Activated CD4-positive, alpha-beta T cell treated with anti-CD3 and anti-CD28 coated beads for 36 hours (primary cell): ENCODE measurements at regions of chr1 and their contacts with region 1.

Region 1: GRCh38 chr1:152047730-152048402 is 11.1 kb upstream of the S100A11 start:
- DNase-seq: peak; percentile 94
- ATAC-seq: peak; percentile 90
- H3K4me3 Mint-ChIP-seq: peak overlapping the region; percentile 72
- H3K27ac Mint-ChIP-seq: peak overlapping the region; percentile 99
- H3K4me1 Mint-ChIP-seq: peaks cover 25% of the 10 kb centered on the region
- H3K27me3 Mint-ChIP-seq: peaks cover 2% of the 10 kb centered on the region

Region 2: GRCh38 chr1:151819976-151820623 is 227.8 kb before region 1 on chr1:
- CTCF ChIA-PET with region 1: no interaction called
- POLR2A ChIA-PET with region 1: no interaction called
- intact Hi-C with region 1: no loop called
- DNase-seq: peak; percentile 75
- ATAC-seq: peak; percentile 71
- H3K4me3 Mint-ChIP-seq: peak overlapping the region; percentile 30
- H3K27ac Mint-ChIP-seq: peak overlapping the region; percentile 83
- H3K4me1 Mint-ChIP-seq: peaks cover 75% of the 10 kb centered on the region
- H3K27me3 Mint-ChIP-seq: no peaks in the 10 kb centered on the region

Region 3: GRCh38 chr1:151993654-151994496 is 54.0 kb before region 1 on chr1 and contains the start of gene S100A10:
- CTCF ChIA-PET with region 1: interaction called, 4 read pairs
- POLR2A ChIA-PET with region 1: no interaction called
- intact Hi-C with region 1: loop called in 1 of 2 experiments (anchors 1 kb)
- DNase-seq: peak; percentile 85
- ATAC-seq: peak; percentile 79
- H3K4me3 Mint-ChIP-seq: peak within 1 kb of the TSS; percentile 90
- H3K27ac Mint-ChIP-seq: peak within 1 kb of the TSS; percentile 94
- H3K4me1 Mint-ChIP-seq: peaks cover 48% of the 10 kb centered on the region
- H3K27me3 Mint-ChIP-seq: no peaks in the 10 kb centered on the region
- total RNA-seq, gene S100A10: 230 to 246 TPM

Region 4: DNA sequence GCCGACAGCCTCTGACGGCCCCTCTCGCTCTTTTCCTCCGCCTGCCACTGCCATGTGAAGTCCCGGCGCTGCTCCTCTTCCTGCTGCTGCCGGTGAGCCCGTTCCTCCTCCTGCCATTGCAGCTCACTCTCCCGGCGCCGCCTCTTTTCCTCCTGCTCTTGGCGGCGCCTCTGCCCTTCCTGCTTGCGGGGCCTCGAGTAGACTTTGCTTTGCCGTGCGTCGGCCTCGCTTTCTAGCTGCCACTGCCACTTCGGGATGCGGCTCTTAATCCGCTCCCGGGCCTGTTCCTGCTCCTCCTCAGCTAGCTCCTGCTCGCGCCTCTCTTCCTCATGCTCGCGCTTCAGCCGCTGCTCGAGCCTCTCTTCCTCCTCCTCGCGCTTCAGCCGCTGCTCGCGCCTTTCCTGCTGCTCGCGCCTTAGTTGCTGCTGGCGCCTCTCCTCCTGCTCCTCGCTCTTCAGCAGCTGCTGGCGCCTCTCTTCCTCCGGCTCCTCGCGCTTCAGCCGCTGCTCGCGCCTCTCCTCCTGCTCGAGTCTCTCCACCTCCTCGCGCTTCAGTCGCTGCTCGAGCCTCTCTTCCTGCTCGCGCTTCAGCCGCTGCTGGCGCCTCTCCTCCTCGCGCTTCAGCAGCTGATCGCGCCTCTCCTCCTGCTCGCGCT is 63.1 kb after region 1 on chr1:
- CTCF ChIA-PET with region 1: interaction called, 33 read pairs
- POLR2A ChIA-PET with region 1: no interaction called
- intact Hi-C with region 1: loop called (anchors 1 to 5 kb)
- DNase-seq: peak; percentile 65
- ATAC-seq: peak; percentile 63
- H3K4me3 Mint-ChIP-seq: no peak overlapping the region
- H3K27ac Mint-ChIP-seq: no peak overlapping the region
- H3K4me1 Mint-ChIP-seq: no peaks in the 10 kb centered on the region
- H3K27me3 Mint-ChIP-seq: peaks cover 13% of the 10 kb centered on the region

Region 5: GRCh38 chr1:152347116-152347728 is 299.4 kb after region 1 on chr1:
- CTCF ChIA-PET with region 1: no interaction called
- POLR2A ChIA-PET with region 1: no interaction called
- intact Hi-C with region 1: loop called (anchors 5 kb)
- DNase-seq: peak; percentile 60
- ATAC-seq: peak; percentile 73
- H3K4me3 Mint-ChIP-seq: no peak overlapping the region
- H3K27ac Mint-ChIP-seq: no peak overlapping the region
- H3K4me1 Mint-ChIP-seq: peaks cover 7% of the 10 kb centered on the region
- H3K27me3 Mint-ChIP-seq: peaks cover 22% of the 10 kb centered on the region

Region 6: DNA sequence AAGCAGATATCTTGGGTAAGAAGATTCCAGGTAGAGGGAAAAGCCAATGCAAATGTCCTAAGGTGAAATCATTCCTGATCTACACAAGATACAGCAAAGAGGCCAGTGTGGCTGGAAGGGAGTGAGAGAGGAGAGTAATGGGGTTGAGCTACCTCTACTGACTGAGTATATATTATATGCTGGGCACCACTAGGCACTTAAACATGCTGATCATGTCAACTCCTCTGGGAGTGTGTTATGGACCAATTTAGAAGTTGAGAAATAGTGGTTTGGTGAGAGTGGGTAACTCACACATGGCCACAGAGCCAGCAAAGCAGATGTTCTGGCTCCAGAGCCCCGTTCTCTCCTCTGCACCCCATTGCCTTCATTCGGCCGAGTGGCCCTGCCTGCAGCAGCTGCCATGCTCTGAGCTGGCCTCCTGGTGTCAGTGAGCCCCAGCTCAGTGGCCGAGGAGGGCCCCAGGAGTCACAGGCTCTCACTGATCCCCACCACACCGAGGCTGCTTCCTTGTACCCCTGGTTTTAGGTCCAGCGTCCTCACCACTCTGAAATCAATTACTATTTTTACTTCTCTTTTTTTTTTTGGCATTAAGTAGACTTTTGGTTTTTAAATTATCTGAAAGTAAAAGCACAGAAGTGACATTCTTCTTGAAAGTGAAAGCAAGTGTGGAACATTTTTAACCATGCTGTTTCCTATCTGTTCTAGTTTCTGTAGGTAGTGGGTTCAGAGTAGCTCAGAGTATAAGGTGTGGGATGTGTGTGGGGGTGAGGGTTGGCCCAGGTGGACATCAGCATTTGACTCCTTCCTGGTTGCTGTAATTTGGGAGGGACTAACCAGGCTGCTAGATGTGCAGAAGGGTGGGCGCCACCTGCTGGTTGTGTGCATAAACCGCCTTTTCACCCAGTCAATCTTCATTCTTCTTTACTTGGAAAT is 412.0 kb after region 1 on chr1:
- CTCF ChIA-PET with region 1: interaction called, 25 read pairs
- POLR2A ChIA-PET with region 1: interaction called, 4 read pairs
- intact Hi-C with region 1: loop called (anchors 1 to 2 kb)
- DNase-seq: peak; percentile 88
- ATAC-seq: peak; percentile 89
- H3K4me3 Mint-ChIP-seq: peak overlapping the region; percentile 52
- H3K27ac Mint-ChIP-seq: peak overlapping the region; percentile 72
- H3K4me1 Mint-ChIP-seq: peaks cover 31% of the 10 kb centered on the region
- H3K27me3 Mint-ChIP-seq: peaks cover 2% of the 10 kb centered on the region